Activated CD8-positive, alpha-beta T cell treated with anti-CD3 and anti-CD28 coated beads, Interleukin-2, amount 10 ng/mL, durations not matched to agents 7 days and 5 days (primary cell): ENCODE measurements at regions of chr19 and their contacts with region 1.

Region 1: GRCh38 chr19:53853707-53854106 is 14.0 kb upstream of the MYADM start:
- DNase-seq: peak; percentile 32
- ATAC-seq: peak; percentile 53
- H3K4me3 Mint-ChIP-seq: no peak overlapping the region
- H3K27ac Mint-ChIP-seq: no peak overlapping the region
- H3K4me1 Mint-ChIP-seq: peaks cover 20% of the 10 kb centered on the region
- H3K27me3 Mint-ChIP-seq: peaks cover 11% of the 10 kb centered on the region

Region 2: DNA sequence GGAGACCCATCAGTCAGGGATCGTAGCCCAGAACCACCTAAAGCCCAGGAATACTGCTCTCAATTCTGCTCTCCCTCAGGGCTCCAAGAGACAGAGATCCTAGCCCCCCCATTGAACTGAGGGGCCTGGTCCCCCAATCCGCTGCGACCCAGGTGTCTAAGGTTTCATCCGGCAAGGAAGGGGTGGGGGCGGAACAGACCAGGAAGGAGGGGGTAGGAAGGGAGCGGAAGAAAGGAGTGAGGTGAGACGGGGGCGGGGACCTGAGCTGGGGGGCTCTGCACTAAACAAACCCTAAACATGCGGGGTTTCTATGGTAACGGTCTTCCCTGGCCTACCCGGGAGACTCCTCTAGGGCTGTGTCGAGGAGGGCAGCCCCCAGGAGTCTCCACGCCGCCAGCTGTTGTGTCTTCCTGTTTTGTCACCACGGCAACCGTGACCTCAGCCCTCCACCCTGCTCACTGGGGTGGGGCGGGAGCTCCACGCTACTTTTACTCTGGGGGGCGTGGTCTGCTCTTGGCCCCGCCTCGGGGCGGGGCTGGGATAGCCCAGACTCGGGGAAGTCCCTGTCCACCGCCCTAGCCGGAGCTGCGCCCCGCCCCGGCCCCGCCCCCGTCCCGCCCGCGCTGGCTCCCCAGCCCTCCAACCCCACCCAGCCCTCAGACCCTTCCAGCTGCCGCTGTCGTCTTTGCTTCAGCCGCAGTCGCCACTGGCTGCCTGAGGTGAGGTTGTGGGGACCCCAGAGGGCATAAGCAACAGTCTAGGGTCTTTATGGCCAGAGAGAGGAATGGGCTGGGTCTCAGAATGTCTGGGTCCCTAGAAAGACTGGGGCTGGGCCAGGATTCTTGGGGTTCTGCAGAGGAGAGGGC is 13.8 kb after region 1 on chr19 and contains the start of gene MYADM:
- CTCF ChIA-PET with region 1: interaction called, 16 read pairs
- POLR2A ChIA-PET with region 1: interaction called, 5 read pairs
- DNase-seq: peak; percentile 100
- ATAC-seq: peak; percentile 54
- H3K4me3 Mint-ChIP-seq: peak within 1 kb of the TSS; percentile 97
- H3K27ac Mint-ChIP-seq: peak within 1 kb of the TSS; percentile 94
- H3K4me1 Mint-ChIP-seq: peaks cover 36% of the 10 kb centered on the region
- H3K27me3 Mint-ChIP-seq: no peaks in the 10 kb centered on the region
- total RNA-seq, gene MYADM: 92.9 to 98.1 TPM

Region 3: GRCh38 chr19:53879140-53880081 is 25.7 kb after region 1 on chr19:
- CTCF ChIA-PET with region 1: interaction called, 10 read pairs
- POLR2A ChIA-PET with region 1: interaction called, 4 read pairs
- DNase-seq: peak; percentile 90
- ATAC-seq: peak; percentile 79
- H3K4me3 Mint-ChIP-seq: no peak overlapping the region
- H3K27ac Mint-ChIP-seq: no peak overlapping the region
- H3K4me1 Mint-ChIP-seq: peaks cover 44% of the 10 kb centered on the region
- H3K27me3 Mint-ChIP-seq: peaks cover 14% of the 10 kb centered on the region

Region 4: GRCh38 chr19:54023191-54023590 is 169.5 kb after region 1 on chr19:
- CTCF ChIA-PET with region 1: interaction called, 10 read pairs
- POLR2A ChIA-PET with region 1: no interaction called
- DNase-seq: no peak
- ATAC-seq: no peak
- H3K4me3 Mint-ChIP-seq: no peak overlapping the region
- H3K27ac Mint-ChIP-seq: no peak overlapping the region
- H3K4me1 Mint-ChIP-seq: peaks cover 13% of the 10 kb centered on the region
- H3K27me3 Mint-ChIP-seq: peaks cover 10% of the 10 kb centered on the region